ENCODE measurements at regions of chr1 and their contacts with region 1.

Region 1: DNA sequence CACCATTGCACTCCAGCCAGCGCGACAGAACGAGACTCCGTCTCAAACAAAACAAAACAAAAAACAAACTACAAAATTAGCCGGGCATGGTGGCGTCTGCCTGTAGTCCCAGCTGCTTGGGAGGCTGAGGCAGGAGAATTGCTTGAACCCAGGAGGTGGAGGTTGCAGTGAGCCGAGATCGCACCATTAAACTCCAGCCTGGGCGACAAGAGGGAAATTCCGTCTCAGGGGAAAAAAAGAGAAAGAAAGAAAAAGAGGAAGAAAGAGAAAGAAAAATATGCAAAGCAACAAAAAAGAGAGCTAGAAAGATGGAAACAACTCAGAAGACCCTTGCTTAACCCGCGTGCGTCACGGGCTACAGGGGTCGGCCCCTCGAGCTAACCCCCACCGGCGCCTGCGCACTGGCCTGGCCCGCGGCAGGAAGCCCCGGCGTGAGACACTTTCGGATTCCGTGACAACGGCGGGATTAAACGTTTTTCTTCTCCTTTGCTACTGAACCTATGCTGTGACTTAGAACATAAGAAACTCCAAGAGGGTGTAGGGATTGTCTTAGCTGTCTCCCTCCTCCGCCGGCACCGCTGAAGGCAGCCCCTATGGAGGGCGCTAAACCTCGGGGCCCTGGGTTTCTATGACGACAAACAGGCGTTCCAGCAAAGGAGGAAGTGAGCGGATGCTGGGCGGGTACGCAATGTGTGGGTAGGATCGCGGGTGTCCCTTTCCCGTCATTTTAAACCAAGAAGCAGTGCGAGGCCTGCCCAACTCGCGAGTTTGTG is at the start of gene AXDND1:
- DNase-seq: peak; percentile 90 to 94 (median 94)
- ATAC-seq: peak; percentile 98
- H3K4me3 ChIP-seq: peak within 1 kb of the TSS; percentile 54 to 70
- H3K27ac ChIP-seq: peak within 1 kb of the TSS; percentile 96 to 98
- H3K4me1 ChIP-seq: peaks cover 0 to 12% of the 10 kb centered on the region in 2 donors
- H3K27me3 ChIP-seq: no peaks in the 10 kb centered on the region
- CTCF ChIP-seq: peak in 1 of 2 donors; percentile 6
- polyA plus RNA-seq, gene AXDND1: 0.37 to 0.86 (median 0.70) TPM

Region 2: GRCh38 chr1:179081687-179082332 is 283.7 kb before region 1 on chr1 and contains the start of gene TOR3A:
- intact Hi-C with region 1: loop called in 1 of 2 experiments (anchors 10 kb)
- DNase-seq: peak; percentile 85 to 98 (median 95)
- ATAC-seq: peak; percentile 97
- H3K4me3 ChIP-seq: peak within 1 kb of the TSS; percentile 82 to 96
- H3K27ac ChIP-seq: peak within 1 kb of the TSS; percentile 84 to 93
- H3K4me1 ChIP-seq: peaks cover 5 to 24% of the 10 kb centered on the region in 2 donors
- H3K27me3 ChIP-seq: no peaks in the 10 kb centered on the region
- CTCF ChIP-seq: no peak
- polyA plus RNA-seq, gene TOR3A: 22.1 to 29.6 (median 24.2) TPM

Region 3: DNA sequence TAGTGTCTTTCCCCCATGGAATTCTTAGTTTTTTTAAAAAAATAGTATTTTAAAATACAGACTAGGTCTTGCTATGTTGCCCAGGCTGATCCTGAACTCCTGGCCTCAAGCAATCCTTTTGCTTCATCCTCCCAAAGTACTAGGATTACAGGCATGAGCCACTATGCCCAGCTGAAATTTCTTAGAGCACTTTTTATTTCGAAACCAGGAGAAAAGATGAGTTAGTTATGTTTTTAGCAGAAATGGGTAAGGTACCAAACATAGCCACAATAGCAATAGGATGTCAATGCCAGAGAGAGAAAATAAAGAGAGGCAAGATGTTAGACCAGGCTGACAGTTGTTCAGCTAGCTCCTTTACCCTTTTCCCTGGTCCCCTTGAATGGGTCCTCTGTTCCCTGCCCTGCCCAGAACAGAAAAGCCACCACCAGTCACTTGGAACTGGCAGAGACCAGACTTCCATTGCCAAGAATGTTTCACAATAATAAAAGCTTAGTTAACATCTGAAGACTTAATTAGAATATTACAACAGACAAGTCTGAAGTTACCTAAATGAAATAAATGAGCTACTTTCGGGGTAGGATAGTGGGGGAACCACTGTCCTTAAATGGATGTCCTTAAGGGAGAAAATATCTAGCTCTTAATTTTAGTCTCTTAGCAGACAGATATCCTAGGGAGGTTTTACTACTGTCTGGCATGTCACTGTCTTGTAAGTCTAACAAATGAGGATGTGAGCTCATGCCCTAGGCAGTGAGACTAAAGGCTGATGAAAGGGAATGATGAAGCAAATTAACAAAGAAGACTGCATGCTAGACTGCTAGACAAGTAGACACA is 190.3 kb before region 1 on chr1:
- intact Hi-C with region 1: no loop called
- DNase-seq: no peak
- ATAC-seq: peak; percentile 77
- H3K4me3 ChIP-seq: no peak overlapping the region
- H3K27ac ChIP-seq: peak overlapping the region; percentile 20 to 76
- H3K4me1 ChIP-seq: peaks cover 0 to 27% of the 10 kb centered on the region in 2 donors
- H3K27me3 ChIP-seq: no peaks in the 10 kb centered on the region
- CTCF ChIP-seq: no peak

Region 4: GRCh38 chr1:179231923-179232322 is 133.6 kb before region 1 on chr1:
- intact Hi-C with region 1: no loop called
- DNase-seq: no peak
- ATAC-seq: no peak
- H3K4me3 ChIP-seq: no peak overlapping the region
- H3K27ac ChIP-seq: no peak overlapping the region
- H3K4me1 ChIP-seq: peaks cover 6 to 29% of the 10 kb centered on the region in 2 donors
- H3K27me3 ChIP-seq: no peaks in the 10 kb centered on the region
- CTCF ChIP-seq: no peak